Heart right ventricle (tissue), 16 donors: ENCODE measurements at regions of chr1 and their contacts with region 1.

Region 1: DNA sequence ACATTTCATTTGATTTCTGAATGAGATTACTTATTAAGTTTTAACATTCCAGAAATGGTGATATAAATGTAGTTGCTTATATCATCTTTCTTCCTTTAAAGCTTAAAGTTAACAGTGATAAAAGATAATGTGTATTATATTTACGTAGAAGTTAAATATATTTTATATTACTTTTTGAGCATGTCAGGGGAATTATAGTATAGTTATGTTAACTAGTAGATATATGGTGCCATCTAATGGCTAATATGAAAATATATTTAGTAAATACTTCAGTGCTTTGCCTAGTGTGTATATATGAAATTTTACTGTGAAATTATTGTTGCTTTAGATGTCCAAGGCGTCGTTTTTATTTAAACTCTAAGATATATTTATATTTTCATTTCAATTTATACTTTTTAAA is 51.5 kb downstream of the SYT14 start:
- DNase-seq: no peak
- ATAC-seq: no peak
- H3K4me3 ChIP-seq: no peak overlapping the region
- H3K27ac ChIP-seq: no peak overlapping the region
- H3K4me1 ChIP-seq: no peaks in the 10 kb centered on the region
- H3K27me3 ChIP-seq: peaks cover 0 to 36% (median 18%) of the 10 kb centered on the region in 7 donors
- CTCF ChIP-seq: peak in 8 of 9 donors; percentile 6 to 52 (median 28)

Region 2: DNA sequence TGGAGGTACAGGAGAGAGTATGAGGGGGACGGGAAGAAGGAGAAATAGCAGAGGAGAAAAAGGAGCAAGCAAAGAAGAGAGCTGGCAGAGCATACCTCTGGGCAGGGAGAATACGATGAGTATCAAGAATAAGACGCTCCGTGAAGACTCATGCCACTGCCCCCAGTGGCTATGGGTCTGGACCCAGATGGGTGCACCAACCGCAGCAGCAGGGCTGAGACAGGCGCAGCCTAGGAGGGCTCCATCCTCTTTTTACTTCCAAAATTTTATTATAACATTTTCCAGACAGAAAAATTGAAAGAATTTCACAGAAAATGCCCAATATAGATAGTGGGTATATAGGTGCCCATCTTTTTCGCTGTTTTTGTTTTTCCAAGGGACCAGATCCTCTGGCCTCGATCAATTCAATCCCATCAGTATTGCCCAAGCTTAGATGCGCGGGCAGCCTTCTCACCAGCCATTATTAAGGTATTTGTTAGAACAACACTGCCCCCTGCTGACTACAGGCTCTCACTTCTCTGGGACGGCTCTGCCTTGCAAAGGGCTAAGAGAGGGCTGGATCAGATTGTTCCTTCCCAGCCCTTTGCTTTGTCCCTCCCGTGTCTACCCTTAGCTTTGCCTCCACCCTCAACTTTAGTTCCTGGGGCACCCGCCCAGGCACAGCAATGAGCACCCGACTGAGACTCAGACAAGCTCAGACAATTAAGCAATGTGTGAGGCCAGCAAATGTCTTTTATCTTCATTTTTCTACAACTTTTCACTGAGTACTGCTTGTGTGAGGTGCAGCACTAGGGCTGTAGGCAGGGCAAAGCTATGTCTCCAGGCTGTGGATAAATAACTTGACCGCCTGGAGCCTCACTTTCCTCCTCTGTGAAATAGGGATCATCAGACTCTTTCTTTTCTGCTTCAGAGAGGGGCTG is 423.5 kb before region 1 on chr1:
- intact Hi-C with region 1: loop called in 3 of 10 experiments (anchors 5 to 10 kb)
- DNase-seq: peak; percentile 50 to 79
- ATAC-seq: peak; percentile 79 to 91 (median 88)
- H3K4me3 ChIP-seq: no peak overlapping the region
- H3K27ac ChIP-seq: no peak overlapping the region
- H3K4me1 ChIP-seq: peaks cover 0 to 4% (median 0%) of the 10 kb centered on the region in 9 donors
- H3K27me3 ChIP-seq: peaks cover 0 to 32% (median 12%) of the 10 kb centered on the region in 7 donors
- CTCF ChIP-seq: peak; percentile 38 to 83 (median 76)

Region 3: GRCh38 chr1:209576798-209577197 is 412.7 kb before region 1 on chr1:
- intact Hi-C with region 1: loop called in 2 of 10 experiments (anchors 10 kb)
- DNase-seq: peak; percentile 81 to 84
- ATAC-seq: peak; percentile 90 to 97 (median 94)
- H3K4me3 ChIP-seq: no peak overlapping the region
- H3K27ac ChIP-seq: no peak overlapping the region
- H3K4me1 ChIP-seq: peaks cover 0 to 5% (median 0%) of the 10 kb centered on the region in 9 donors
- H3K27me3 ChIP-seq: peaks cover 0 to 39% (median 18%) of the 10 kb centered on the region in 7 donors
- CTCF ChIP-seq: peak; percentile 81 to 98 (median 96)

Region 4: DNA sequence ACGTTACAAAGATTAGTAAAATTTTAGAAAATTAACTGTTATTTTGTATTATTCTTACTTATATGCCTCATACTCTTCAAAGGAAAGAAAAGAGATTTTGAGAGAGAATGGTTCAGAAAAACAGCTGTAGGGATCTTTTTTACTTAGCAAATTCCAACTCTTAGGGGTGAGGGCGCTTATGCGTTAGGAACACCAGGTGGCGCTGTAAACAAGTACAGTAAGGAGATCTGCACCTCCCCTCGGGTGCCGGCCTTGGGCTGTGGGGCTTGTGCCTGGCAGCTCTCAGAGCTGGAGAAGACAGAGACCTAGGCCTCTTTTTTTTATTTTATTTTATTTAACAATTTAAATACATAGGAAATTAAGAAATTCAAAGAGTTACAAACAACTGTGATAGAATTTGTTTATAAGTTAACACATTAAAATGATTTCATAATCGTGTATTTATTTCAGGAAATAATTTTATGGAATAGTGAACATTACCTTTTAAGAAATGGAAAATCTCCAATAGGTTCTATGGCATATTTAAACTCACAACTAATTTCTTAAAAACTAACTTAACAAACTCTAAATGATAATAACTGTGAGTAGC is 129.1 kb before region 1 on chr1:
- intact Hi-C with region 1: loop called in 9 of 10 experiments (anchors 1 to 10 kb)
- DNase-seq: peak; percentile 58 to 60
- ATAC-seq: peak in 6 of 8 donors; percentile 59 to 81 (median 78)
- H3K4me3 ChIP-seq: no peak overlapping the region
- H3K27ac ChIP-seq: no peak overlapping the region
- H3K4me1 ChIP-seq: no peaks in the 10 kb centered on the region
- H3K27me3 ChIP-seq: peaks cover 0 to 33% (median 22%) of the 10 kb centered on the region in 7 donors
- CTCF ChIP-seq: peak; percentile 66 to 96 (median 87)

Region 5: DNA sequence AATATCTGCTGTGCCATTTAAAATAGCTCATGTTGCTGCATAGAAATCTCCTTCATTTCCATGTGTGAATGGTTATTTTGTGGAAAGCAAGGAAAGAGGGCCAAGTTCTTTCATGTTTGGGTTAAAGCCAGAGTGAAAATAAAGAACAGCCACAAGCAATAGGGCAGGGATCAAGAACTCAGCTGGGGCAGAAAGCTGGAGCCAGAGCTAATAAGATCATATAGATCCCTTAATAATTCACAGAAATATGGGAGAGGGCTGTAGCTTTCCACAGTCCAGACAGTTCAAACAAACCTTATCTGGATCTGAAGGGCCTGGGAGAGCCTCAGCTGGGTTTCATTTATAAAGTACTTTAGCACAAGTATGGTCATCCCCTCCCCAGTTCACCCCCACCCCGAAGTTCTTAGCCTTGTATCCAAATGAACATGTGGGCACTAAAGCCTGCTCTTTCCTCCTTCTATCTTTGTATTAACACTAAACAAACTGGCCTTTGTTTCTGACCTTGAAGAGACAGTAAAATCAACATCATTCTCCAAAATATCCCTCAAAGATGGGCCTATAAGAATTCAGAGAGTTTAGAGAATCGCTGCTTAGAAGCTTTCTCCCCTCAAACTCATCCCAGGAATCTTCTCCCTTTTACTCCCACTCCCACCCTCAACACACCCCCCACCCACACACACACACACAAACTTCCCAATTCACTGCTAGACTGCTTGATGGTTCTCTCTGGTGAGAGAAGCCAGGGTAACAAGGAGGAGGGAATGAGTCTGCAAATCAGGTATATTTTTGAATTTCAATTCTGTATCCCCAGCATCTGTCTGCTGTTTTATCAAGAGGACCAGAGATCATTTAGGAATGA is 120.0 kb before region 1 on chr1:
- intact Hi-C with region 1: loop called in 3 of 10 experiments (anchors 5 to 10 kb)
- DNase-seq: no peak
- ATAC-seq: no peak
- H3K4me3 ChIP-seq: no peak overlapping the region
- H3K27ac ChIP-seq: no peak overlapping the region
- H3K4me1 ChIP-seq: no peaks in the 10 kb centered on the region
- H3K27me3 ChIP-seq: peaks cover 0 to 14% (median 8%) of the 10 kb centered on the region in 7 donors
- CTCF ChIP-seq: no peak

Region 6: GRCh38 chr1:209899948-209900347 is 89.6 kb before region 1 on chr1:
- intact Hi-C with region 1: no loop called
- DNase-seq: no peak
- ATAC-seq: no peak
- H3K4me3 ChIP-seq: no peak overlapping the region
- H3K27ac ChIP-seq: no peak overlapping the region
- H3K4me1 ChIP-seq: no peaks in the 10 kb centered on the region
- H3K27me3 ChIP-seq: peaks cover 0 to 9% (median 0%) of the 10 kb centered on the region in 7 donors
- CTCF ChIP-seq: peak in 2 of 9 donors; percentile 10 to 18

Region 7: DNA sequence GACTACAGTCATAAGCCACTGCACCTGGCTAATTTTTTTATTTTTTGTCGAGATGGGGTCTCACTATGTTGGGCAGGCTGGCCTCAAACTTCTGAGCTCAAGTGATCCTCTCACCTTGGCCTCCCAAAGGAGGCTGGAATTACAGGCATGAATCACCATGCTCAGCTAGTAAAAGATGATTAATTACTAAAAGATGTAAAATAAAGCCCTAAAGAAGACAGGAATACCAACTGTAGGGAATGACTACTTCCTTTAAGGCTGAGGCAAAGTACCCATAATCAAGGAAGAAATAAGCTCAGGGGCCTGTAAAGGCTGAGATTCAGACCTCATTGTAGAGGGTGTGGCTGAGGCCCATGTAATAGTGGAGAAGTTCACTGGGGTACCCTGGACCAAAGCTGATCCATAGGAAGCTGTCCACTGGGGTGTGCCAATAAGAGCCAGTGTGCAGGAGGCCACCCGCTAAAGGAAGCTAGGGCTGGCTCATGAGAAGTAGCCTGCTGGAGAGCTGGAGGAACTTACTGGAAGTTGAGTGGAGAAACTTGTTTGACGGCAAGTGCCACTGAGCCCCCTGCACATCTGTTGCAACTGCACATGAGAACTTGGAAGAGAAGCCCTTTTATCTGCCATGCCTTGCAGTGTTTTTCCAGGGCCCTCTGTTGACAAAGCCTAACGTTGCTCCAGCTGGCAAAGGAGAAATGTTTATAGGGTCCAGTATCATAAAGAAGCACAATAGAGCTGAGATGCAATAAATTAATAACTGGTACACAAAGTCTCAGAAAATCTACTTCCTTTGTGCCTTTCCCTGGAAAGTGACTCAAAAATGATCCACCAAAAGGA is 225.3 kb after region 1 on chr1:
- intact Hi-C with region 1: no loop called
- DNase-seq: no peak
- ATAC-seq: no peak
- H3K4me3 ChIP-seq: no peak overlapping the region
- H3K27ac ChIP-seq: no peak overlapping the region
- H3K4me1 ChIP-seq: no peaks in the 10 kb centered on the region
- H3K27me3 ChIP-seq: peaks cover 0 to 7% (median 0%) of the 10 kb centered on the region in 7 donors
- CTCF ChIP-seq: no peak